ENCODE measurements at regions of chr10 and their contacts with region 1.

Region 1: DNA sequence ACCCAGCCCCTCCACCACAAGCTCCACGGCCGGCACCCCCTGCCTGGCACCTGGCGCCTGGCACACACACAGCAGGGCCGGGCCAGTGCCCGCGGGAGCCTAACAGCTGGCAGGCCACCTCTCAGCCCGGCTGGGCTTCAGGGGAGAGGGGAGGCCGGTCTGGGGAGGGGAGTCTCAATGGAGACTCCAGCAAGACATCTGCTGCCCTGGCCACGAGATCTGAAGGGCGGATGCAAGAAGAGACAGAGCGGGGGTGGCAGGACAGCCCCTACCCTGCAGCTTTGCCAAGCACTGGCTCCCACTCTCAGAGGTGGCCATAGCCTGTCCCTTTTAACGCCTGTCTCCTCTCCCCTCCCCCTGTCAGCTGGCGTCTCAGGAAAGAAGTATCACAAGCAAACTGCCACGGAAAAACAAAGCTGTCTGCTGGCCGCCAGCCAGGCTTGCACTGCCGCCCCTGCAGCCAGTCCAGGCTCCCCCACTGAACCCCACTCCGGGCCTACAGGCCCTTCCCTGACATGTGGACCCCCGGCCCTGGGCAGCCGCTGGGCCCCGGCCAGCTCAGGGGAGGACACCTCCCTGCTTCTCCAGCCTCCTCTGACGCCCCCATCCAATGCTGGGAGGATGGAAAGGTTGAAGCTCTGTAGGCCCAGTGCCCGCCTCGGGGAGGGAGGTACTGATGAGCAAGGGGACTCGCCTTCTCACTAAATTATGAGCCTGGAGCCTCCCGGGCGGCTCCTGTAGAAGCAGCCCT is 178.5 kb downstream of the ARHGAP12 start:
- DNase-seq: peak; percentile 60 to 81 (median 81)
- ATAC-seq: peak; percentile 50 to 51
- H3K4me3 ChIP-seq: no peak overlapping the region
- H3K27ac ChIP-seq: no peak overlapping the region
- H3K4me1 ChIP-seq: peaks cover 17% of the 10 kb centered on the region
- H3K27me3 ChIP-seq: no peaks in the 10 kb centered on the region

Region 2: GRCh38 chr10:31242902-31243301 is 507.3 kb before region 1 on chr10:
- intact Hi-C with region 1: no loop called
- DNase-seq: peak in 1 of 3 donors; percentile 27
- ATAC-seq: peak in 1 of 2 donors; percentile 90
- H3K4me3 ChIP-seq: no peak overlapping the region
- H3K27ac ChIP-seq: no peak overlapping the region
- H3K4me1 ChIP-seq: peaks cover 2% of the 10 kb centered on the region
- H3K27me3 ChIP-seq: no peaks in the 10 kb centered on the region

Region 3: GRCh38 chr10:31707093-31708039 is 42.8 kb before region 1 on chr10:
- intact Hi-C with region 1: loop called in 1 of 4 experiments (anchors 5 kb)
- DNase-seq: peak; percentile 83 to 91 (median 89)
- ATAC-seq: peak; percentile 85 to 95
- H3K4me3 ChIP-seq: no peak overlapping the region
- H3K27ac ChIP-seq: peak overlapping the region; percentile 94
- H3K4me1 ChIP-seq: peaks cover 17% of the 10 kb centered on the region
- H3K27me3 ChIP-seq: no peaks in the 10 kb centered on the region

Measured in right cardiac atrium (tissue), 5 donors.